Endothelial cell of umbilical vein (primary cell): ENCODE measurements at regions of chr10 and their contacts with region 1.

Region 1: DNA sequence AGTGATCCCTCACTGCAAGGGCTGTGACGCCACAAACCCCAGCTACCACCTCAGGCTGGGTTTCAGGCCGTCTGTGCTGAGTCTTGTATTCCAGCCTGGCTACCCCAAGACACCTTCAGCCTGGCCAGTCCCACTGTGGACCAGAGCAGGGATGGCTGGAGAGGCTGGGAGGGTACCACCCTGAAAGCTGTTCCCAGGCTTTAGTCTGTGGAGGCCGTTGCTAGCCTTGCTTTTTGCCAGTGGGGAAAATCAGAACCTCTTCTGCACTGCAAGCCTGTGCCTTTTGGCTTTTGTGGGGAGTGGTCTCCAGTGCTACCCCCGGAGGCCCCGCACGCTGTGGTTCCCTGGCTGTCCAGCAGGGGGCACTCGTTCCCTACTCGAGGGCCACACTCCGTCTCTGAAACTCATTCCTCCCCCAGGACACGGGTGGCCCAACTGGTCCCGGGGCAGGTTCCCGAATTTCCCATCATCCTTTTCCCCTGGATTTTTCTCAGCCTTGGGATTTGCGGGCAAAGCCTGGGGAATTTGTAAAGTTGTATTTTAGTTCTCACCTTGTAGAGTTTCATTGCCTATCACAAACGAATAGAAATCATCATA is 128.4 kb upstream of the BTBD16 start:
- DNase-seq: peak; percentile 43
- H3K4me3 ChIP-seq: no peak overlapping the region
- H3K27ac ChIP-seq: peak overlapping the region; percentile 99
- H3K4me1 ChIP-seq: peaks cover 45% of the 10 kb centered on the region
- H3K27me3 ChIP-seq: no peaks in the 10 kb centered on the region
- CTCF ChIP-seq: peak; percentile 87 to 97
- POLR2A ChIP-seq: no peak

Region 2: DNA sequence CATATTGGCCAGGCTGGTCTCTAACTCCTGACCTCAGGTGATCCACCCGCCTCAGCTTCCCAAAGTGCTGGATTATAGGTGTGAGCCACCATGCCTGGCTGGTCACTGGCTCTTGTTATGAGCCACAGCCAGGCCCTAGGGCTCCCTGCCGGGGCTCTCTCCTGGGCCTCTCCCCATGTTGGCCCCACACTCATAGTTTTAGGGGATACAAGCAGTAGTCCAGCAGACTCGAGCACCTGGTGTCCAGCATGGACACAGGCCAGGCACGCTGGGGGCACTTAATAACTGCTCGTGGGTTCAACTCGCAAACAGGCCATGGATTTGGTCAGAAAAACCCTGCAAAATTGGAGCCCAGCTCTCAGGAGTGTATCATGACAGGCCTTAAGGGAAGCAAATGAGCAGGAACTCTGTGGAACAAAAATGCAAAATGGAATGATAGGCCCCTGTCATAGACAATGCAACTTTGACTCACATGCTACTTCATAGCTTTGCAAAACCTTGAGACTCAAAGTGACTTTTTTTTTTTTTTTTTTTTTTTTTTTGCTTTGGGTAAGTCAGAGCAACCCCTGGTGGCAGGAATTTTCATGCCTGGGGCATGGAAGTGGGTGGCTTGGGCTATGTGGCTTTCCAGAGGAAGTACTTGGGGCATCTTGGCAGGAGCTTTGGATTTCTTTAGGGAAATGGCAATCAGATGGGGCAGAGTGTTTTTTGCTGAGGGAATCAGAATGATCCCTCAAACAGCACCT is 91.3 kb before region 1 on chr10:
- CTCF ChIA-PET with region 1: interaction called, 34 read pairs
- POLR2A ChIA-PET with region 1: no interaction called
- dilution Hi-C with region 1: no loop called
- intact Hi-C with region 1: loop called (anchors 1 kb)
- DNase-seq: peak; percentile 77
- H3K4me3 ChIP-seq: no peak overlapping the region
- H3K27ac ChIP-seq: no peak overlapping the region
- H3K4me1 ChIP-seq: peaks cover 15% of the 10 kb centered on the region
- H3K27me3 ChIP-seq: no peaks in the 10 kb centered on the region
- CTCF ChIP-seq: peak; percentile 75 to 89
- POLR2A ChIP-seq: no peak

Region 3: GRCh38 chr10:122102869-122103525 is 39.7 kb before region 1 on chr10:
- CTCF ChIA-PET with region 1: no interaction called
- POLR2A ChIA-PET with region 1: no interaction called
- dilution Hi-C with region 1: no loop called
- intact Hi-C with region 1: no loop called
- DNase-seq: no peak
- H3K4me3 ChIP-seq: no peak overlapping the region
- H3K27ac ChIP-seq: no peak overlapping the region
- H3K4me1 ChIP-seq: no peaks in the 10 kb centered on the region
- H3K27me3 ChIP-seq: peaks cover 2% of the 10 kb centered on the region in 2 experiments
- CTCF ChIP-seq: no peak
- POLR2A ChIP-seq: no peak

Region 4: GRCh38 chr10:122126763-122127659 is 15.7 kb before region 1 on chr10:
- CTCF ChIA-PET with region 1: interaction called, 35 read pairs
- POLR2A ChIA-PET with region 1: interaction called, 5 read pairs
- dilution Hi-C with region 1: no loop called
- intact Hi-C with region 1: loop called (anchors 1 kb)
- DNase-seq: peak; percentile 92
- H3K4me3 ChIP-seq: no peak overlapping the region
- H3K27ac ChIP-seq: peak overlapping the region; percentile 77
- H3K4me1 ChIP-seq: peaks cover 23% of the 10 kb centered on the region
- H3K27me3 ChIP-seq: no peaks in the 10 kb centered on the region
- CTCF ChIP-seq: no peak
- POLR2A ChIP-seq: no peak

Region 5: DNA sequence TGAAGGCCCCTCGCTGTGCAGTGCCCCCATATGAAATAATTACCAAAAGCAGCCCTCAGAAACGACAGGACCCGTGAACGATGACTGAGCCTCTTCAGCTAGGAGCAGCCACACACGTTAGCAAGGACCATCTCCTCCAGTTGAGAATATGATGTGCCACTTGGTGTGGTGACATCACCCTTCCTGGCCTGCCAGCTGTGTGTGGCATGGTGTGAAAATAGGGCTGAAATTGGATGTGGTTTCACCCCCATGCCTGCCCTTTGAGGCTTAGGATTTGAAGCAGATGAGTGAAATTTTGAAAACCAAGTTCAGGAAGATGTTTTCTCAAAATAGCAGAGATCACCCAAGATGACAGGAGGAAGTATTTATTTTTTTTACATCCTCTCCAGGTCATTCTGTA is 79.2 kb after region 1 on chr10:
- CTCF ChIA-PET with region 1: interaction called, 4 read pairs
- POLR2A ChIA-PET with region 1: no interaction called
- dilution Hi-C with region 1: no loop called
- intact Hi-C with region 1: loop called (anchors 5 kb)
- DNase-seq: no peak
- H3K4me3 ChIP-seq: no peak overlapping the region
- H3K27ac ChIP-seq: no peak overlapping the region
- H3K4me1 ChIP-seq: no peaks in the 10 kb centered on the region
- H3K27me3 ChIP-seq: no peaks in the 10 kb centered on the region
- CTCF ChIP-seq: no peak
- POLR2A ChIP-seq: no peak

Region 6: GRCh38 chr10:122298598-122299301 is 156.0 kb after region 1 on chr10:
- CTCF ChIA-PET with region 1: interaction called, 12 read pairs
- POLR2A ChIA-PET with region 1: no interaction called
- dilution Hi-C with region 1: no loop called
- intact Hi-C with region 1: loop called (anchors 1 kb)
- DNase-seq: peak; percentile 85
- H3K4me3 ChIP-seq: no peak overlapping the region
- H3K27ac ChIP-seq: no peak overlapping the region
- H3K4me1 ChIP-seq: no peaks in the 10 kb centered on the region
- H3K27me3 ChIP-seq: no peaks in the 10 kb centered on the region
- CTCF ChIP-seq: peak; percentile 81 to 96
- POLR2A ChIP-seq: no peak

Region 7: DNA sequence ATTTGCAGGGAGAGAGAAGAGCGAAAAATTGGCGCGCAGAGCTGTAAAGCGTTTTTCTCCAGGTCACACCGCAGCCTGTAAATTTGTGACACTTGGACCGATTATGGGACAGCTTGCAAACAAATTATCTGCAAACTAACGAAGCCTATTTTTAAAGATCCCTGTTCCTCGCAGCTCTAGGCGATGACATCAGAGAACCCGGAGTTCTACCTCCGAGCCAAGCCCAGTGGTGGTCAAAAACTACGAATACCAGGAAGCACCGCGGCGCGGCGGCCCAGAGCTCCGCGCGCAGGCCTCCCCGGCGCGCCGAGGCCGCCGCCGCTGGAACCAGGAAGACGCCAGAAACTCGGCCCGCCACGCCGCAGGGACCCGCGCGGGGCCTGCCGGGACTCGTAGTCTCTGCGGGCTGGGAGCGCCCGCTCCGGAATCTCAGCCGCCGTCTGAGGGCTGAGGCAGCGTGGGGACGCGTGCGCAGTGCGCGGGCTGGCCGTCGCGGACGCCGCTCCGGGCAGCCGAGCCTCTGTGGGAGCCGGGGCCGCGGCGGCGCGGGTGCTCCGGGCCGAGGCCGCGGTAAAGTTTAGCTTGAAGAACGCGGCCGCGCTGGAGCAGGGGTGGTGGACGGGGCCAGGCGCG is 231.6 kb after region 1 on chr10 and contains the start of gene PLEKHA1:
- CTCF ChIA-PET with region 1: interaction called, 5 read pairs
- POLR2A ChIA-PET with region 1: no interaction called
- dilution Hi-C with region 1: no loop called
- intact Hi-C with region 1: loop called (anchors 5 kb)
- DNase-seq: peak; percentile 96
- H3K4me3 ChIP-seq: peak within 1 kb of the TSS; percentile 85 to 93 (median 89)
- H3K27ac ChIP-seq: peak within 1 kb of the TSS; percentile 84
- H3K4me1 ChIP-seq: peaks cover 15% of the 10 kb centered on the region
- H3K27me3 ChIP-seq: no peaks in the 10 kb centered on the region
- CTCF ChIP-seq: no peak
- POLR2A ChIP-seq: peak; percentile 56
- total RNA-seq, gene PLEKHA1: 58.0 and 58.8 TPM in 2 replicates

Region 8: GRCh38 chr10:123154092-123154921 is 1011.6 kb after region 1 on chr10 and contains the start of gene BUB3:
- CTCF ChIA-PET with region 1: no interaction called
- POLR2A ChIA-PET with region 1: no interaction called
- dilution Hi-C with region 1: no loop called
- intact Hi-C with region 1: loop called (anchors 10 kb)
- DNase-seq: peak; percentile 100
- H3K4me3 ChIP-seq: peak within 1 kb of the TSS; percentile 61 to 92 (median 90)
- H3K27ac ChIP-seq: peak within 1 kb of the TSS; percentile 81
- H3K4me1 ChIP-seq: peaks cover 48% of the 10 kb centered on the region
- H3K27me3 ChIP-seq: peaks cover 35 to 41% of the 10 kb centered on the region in 2 experiments
- CTCF ChIP-seq: no peak
- POLR2A ChIP-seq: peak; percentile 91
- total RNA-seq, gene BUB3: 178 and 193 TPM in 2 replicates